Heart left ventricle (tissue), 16 donors: ENCODE measurements at regions of chr12 and their contacts with region 1.

Region 1: GRCh38 chr12:93290391-93290790 is 87.3 kb upstream of the NUDT4 start:
- DNase-seq: no peak
- ATAC-seq: no peak
- H3K4me3 ChIP-seq: no peak overlapping the region
- H3K27ac ChIP-seq: no peak overlapping the region
- H3K4me1 ChIP-seq: peaks cover 0 to 10% (median 4%) of the 10 kb centered on the region in 12 donors
- H3K27me3 ChIP-seq: no peaks in the 10 kb centered on the region
- CTCF ChIP-seq: no peak
- POLR2A ChIP-seq: no peak

Region 2: DNA sequence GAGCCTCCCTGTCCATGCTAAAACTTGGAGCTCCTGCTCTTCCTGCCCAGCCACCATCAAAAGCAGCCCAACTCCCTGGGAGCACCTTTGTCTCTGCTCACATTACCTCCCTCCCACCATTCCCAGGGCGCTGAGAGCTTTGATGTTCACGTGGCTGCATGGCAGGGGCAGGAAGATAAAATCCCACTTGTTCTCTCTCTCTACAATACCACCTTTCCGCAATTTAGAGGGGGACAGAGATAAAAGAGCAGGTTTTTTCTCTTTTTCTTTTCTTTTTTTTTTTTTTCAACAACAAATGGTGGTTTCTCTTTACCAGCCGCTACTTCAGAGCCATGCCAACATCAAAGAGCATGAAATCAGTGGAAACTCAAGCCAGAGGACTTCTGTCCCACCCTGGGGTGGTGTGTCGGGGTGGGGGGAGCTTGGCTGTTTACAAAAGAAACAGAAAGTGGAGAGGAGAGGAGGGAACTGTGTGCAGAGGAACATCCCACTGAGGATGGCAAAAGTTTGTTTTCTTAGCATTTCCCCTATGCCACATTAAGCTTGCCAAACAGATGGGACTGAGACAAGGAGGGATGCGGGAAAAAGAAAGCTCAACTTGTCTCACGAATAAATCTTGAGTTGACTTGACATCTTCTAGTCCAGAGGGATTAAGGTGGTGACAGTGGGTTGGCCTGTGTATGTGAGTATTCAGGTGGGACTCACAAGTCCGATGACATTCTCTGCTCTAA is 16.4 kb before region 1 on chr12:
- intact Hi-C with region 1: loop called in 1 of 10 experiments (anchors 2 kb)
- DNase-seq: no peak
- ATAC-seq: no peak
- H3K4me3 ChIP-seq: no peak overlapping the region
- H3K27ac ChIP-seq: no peak overlapping the region
- H3K4me1 ChIP-seq: peaks cover 0 to 3% (median 0%) of the 10 kb centered on the region in 12 donors
- H3K27me3 ChIP-seq: no peaks in the 10 kb centered on the region
- CTCF ChIP-seq: no peak
- POLR2A ChIP-seq: no peak